Left ventricle myocardium superior (tissue), 1 donor: ENCODE measurements at regions of chr11 and their contacts with region 1.

Region 1: DNA sequence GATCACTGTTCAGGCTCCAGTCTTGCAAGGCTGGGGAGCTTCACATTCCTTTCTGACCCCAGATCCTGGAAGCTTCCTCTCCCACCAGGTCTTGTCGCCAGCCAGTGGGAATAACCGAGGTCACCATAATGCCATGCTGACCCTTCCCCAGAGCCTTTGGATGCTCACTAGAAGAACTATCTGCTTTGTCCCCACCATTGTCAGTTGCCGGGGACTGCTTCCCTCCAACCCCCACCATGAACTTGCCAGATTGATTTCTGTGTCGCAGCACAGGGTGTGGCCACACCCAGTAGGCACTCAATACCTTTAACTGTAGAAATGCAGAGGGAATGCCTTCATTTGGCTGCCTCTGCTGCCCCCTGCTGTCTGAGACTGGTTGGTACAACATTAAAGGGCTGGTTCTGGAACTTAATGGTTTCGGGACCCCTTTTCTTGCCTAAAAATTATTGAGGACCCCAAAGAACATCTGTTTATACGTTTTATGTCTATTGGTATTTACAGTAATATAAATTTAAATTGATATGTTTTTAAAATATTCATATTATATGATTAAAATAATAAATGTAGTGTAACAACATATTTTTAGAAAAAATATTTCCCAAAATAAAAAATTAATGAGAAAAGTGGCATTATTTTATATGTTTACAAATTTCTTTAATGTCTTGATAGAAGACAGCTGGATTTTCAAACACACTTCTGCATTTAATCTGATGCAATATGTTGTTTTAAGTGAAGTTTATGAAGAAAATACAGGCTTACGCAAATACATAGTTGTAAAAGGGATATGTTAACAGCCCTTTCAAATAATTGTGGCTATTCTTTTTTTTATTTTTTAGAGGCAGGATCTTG is 6.7 kb upstream of the GDPD5 start:
- DNase-seq: peak; percentile 69
- ATAC-seq: peak; percentile 56

Region 2: DNA sequence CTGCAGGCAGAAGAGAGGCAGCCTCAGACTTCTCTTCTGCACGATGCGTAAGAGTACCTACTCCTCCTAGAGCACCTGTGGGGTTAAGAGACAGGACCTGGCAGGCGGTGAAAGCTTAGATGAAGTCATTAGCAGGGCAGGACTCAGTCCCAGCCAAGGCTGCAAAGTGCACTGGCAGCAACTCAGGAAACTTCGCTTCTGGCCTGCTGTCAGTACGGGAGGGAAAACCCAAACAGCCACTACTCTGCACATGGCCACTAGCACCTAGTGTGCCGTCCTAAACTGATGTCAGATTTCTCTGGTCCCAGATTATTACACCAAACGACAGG is 90.7 kb before region 1 on chr11:
- intact Hi-C with region 1: loop called (anchors 2 kb)
- DNase-seq: peak; percentile 54
- ATAC-seq: peak; percentile 81